Mammary epithelial cell (primary cell): ENCODE measurements at regions of chr2 and their contacts with region 1.

Region 1: DNA sequence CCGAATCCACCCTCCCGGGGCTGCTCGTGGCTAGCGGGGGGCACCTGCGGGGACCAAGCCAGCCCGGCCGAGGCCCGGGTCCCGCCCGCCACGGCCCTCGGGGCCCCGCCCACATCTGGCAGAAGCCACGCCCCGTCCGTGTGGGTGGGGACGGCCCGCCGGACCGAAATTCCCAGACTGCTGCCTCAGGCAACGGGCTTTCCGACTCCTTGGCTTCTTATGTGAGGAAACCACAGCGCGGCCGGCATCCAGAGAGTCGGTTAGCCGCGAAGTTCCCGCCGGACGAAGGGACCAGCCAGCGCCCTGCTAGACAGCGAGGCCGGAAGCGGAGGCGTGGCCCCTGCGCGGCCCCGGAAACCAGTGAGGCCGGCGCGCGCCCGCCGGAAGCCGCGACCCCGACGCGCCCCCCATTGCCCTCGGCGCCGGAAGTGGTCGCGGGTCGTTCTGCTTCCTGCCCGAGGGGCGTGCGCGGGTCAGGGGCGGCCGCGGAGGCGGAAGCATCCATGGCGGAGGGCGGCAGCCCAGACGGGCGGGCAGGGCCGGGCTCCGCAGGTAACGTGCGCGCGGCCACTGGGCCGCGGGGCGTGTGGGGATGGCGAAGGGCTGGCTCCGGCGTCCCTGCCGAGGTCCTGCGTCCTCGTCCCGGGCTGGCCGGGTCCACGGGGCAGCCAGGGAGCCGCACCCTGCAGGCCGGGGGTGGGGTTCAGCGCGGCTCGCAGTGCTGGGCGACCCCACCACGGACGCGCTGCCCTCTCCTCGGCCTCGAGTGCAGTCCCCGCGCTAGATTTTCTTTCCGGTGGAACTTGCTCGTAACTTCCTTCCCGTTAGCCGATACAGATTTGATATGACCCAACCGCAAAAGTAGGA is at the start of gene ASB1:
- DNase-seq: peak; percentile 91
- H3K4me3 ChIP-seq: peak within 1 kb of the TSS; percentile 56 to 84 (median 60)
- H3K27ac ChIP-seq: peak within 1 kb of the TSS; percentile 78
- H3K4me1 ChIP-seq: peaks cover 17% of the 10 kb centered on the region
- H3K27me3 ChIP-seq: no peaks in the 10 kb centered on the region
- CTCF ChIP-seq: no peak
- total RNA-seq, gene ASB1: 26.8 to 49.5 TPM

Region 2: DNA sequence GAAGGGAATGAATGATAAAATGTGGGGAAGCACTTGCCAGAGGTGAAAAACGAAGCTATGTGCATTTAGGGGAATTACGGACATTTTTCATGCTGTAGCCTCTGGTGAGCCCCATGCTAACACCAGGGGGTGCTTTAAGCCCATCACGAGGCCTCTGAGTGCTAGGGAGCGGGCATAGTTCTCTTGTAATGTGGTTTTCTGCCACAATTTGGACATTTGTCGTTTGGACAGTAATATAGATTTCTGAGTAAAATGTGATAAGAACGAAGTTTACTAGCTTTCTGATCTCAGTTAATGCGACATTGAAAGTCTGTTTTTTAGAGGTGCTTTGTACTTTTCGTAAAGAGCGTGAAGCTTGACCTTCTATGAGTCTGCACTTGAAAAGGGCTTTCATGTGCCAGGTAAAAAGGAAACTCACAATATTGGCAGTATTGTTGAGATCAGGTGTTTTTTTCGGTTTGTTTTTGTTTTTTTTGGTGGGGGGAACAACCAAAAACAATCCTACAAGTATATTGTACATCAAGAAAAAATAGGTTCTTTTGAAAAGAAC is 55.9 kb before region 1 on chr2:
- CTCF ChIA-PET with region 1: no interaction called
- dilution Hi-C with region 1: no loop called
- in situ Hi-C with region 1: no loop called
- intact Hi-C with region 1: loop called (anchors 1 kb)
- DNase-seq: peak; percentile 51
- H3K4me3 ChIP-seq: no peak overlapping the region
- H3K27ac ChIP-seq: no peak overlapping the region
- H3K4me1 ChIP-seq: no peaks in the 10 kb centered on the region
- H3K27me3 ChIP-seq: no peaks in the 10 kb centered on the region
- CTCF ChIP-seq: peak; percentile 79 to 82

Region 3: DNA sequence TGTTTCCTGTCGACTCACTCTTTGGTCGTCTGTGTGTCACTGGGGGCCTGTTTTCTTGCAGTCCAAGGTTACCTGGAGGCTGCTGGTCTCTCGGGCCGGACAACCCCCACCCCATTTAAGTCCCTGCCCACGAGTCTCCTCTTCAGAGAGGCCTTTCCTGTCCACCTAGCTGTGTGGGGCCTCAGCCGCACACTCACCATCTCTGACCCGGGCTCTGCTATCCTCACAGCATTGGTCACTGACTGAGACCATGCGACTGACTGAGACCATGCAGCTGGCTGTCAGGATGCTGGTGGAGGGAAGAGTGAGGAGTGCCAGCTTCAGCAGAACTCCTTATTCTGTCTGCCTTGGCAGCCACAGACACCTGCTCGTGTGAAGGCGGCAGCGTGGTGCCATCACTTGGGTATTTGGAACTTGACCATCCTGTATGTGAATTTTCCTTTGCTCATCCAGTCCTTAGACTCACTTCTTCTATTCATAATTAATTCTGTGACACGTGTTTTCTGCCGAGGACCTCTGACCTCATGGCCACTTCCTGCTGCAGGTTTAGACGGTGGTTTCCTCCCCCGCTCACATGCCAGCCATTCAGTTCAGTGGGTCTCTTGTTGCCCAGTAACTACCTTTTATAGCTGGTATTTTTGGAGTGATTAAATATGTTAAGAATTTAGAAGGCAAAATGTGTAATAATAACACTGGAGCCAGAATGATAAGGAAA is 47.5 kb before region 1 on chr2:
- CTCF ChIA-PET with region 1: no interaction called
- dilution Hi-C with region 1: no loop called
- in situ Hi-C with region 1: no loop called
- intact Hi-C with region 1: loop called (anchors 2 kb)
- DNase-seq: peak; percentile 84
- H3K4me3 ChIP-seq: no peak overlapping the region
- H3K27ac ChIP-seq: peak overlapping the region; percentile 61
- H3K4me1 ChIP-seq: peaks cover 32% of the 10 kb centered on the region
- H3K27me3 ChIP-seq: no peaks in the 10 kb centered on the region
- CTCF ChIP-seq: no peak

Region 4: DNA sequence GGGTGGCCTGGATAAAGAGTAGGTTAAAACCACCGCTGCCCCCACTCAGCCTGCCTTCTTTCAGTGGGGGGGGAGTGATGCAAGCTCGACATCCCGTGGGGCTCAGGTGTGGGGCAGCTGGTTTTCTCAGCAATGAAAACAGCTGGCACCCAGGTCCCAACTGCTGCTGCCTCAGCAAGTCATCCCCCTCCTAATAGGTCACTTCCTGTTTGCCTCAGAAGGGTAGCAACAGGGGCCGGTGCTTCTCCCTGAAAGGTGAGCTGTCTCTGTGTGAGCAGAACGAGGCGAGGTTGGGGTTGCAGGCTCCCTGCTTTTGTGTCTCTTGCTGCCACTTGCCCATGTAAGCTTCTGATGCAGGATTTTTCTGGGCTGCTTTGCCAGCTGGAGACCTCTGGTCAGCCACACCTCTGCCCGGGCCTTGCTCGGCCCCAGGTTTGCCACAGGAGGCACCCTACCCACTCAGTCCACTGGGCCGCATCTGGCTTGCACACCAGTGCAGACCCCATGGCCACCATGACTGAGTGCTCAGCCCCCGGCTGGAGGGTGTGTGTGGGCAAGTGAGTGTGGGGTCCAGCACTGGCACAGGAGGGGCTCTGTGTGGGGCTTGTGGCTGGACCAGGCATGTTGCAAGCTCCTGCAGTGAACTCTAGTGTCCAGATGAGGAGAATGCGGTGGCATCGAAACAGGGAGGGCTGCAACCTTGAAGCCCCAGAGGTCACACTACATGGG is 11.6 kb before region 1 on chr2:
- CTCF ChIA-PET with region 1: no interaction called
- dilution Hi-C with region 1: no loop called
- in situ Hi-C with region 1: no loop called
- intact Hi-C with region 1: no loop called
- DNase-seq: peak; percentile 21
- H3K4me3 ChIP-seq: no peak overlapping the region
- H3K27ac ChIP-seq: no peak overlapping the region
- H3K4me1 ChIP-seq: peaks cover 3% of the 10 kb centered on the region
- H3K27me3 ChIP-seq: no peaks in the 10 kb centered on the region
- CTCF ChIP-seq: no peak

Region 5: DNA sequence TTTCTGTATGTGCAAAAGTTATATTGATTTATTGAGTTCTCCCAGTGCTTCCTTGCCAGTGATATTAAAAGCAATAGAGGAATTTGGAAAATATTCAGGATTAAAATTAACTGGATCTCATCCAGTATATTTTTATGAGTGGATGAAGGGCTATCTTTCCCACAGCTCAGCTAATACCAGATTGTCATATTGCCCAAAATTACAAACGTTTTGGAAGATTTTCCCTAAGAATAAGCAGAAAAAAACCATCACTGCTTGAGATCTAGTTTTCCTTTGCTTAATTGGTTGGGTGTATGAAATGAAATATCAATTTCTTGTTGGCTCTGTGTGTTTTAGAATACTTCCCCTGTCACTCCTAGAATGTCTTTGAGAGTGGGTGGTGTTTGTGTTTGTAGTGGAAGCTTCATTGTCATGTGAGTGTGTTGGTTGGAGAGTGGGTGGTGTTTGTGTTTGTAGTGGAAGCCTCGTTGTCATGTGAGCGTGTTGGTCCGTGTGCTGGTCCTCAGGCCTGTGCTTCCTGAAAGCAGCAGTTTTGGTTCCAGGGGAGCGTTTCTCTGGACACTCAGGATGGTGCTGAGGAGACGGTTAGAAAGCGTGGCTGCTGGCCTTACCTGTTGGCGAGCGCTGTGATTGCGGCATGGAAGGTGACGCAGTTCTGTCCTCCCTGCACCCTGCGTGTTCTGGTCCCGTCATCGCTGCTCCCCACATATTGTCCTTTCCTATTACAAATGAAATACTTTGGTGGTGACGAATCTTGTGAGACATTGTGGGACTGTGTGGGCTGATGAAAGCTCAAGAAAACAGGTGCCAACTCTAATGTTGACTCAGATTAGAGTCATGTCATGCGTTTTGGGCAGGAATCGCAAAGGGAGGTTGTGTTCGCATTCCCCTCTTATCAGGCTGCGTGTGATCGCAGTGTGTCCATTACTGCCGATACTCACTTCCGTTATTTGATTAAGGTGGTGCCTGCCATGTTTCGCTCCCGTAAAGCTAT is 12.4 kb after region 1 on chr2:
- CTCF ChIA-PET with region 1: no interaction called
- dilution Hi-C with region 1: no loop called
- in situ Hi-C with region 1: no loop called
- intact Hi-C with region 1: loop called (anchors 1 kb)
- DNase-seq: peak; percentile 100
- H3K4me3 ChIP-seq: peak overlapping the region; percentile 6 to 29 (median 22)
- H3K27ac ChIP-seq: peak overlapping the region; percentile 97
- H3K4me1 ChIP-seq: peaks cover 29% of the 10 kb centered on the region
- H3K27me3 ChIP-seq: no peaks in the 10 kb centered on the region
- CTCF ChIP-seq: no peak

Region 6: DNA sequence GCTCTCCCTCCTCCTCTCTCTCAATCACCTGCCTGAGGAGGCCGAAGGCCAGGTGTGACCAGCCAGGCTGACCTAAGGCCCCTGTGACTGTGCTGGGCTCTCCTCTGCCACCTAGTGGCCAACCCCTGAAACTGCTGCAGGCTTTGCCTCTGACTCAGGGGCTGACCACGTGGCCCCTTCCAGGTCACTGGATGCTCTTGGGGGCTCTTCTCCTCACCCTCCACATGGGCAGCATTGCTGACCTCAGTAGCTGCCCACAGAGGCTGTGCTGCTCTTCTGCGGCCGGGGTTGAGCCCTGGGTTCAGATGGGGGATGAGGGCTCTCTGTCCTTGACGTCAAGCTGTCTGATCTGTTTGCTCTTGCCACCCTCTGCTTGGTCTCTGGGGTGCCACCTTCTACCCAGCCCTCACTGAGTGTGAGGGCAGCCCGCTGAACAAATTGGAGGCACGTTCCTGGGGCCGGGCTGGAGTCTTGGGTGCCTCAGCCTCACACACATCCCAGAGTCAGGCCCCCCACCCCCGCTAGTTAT is 543.8 kb after region 1 on chr2:
- CTCF ChIA-PET with region 1: no interaction called
- dilution Hi-C with region 1: no loop called
- in situ Hi-C with region 1: no loop called
- intact Hi-C with region 1: no loop called
- DNase-seq: peak; percentile 36
- H3K4me3 ChIP-seq: no peak overlapping the region
- H3K27ac ChIP-seq: no peak overlapping the region
- H3K4me1 ChIP-seq: peaks cover 21% of the 10 kb centered on the region
- H3K27me3 ChIP-seq: no peaks in the 10 kb centered on the region
- CTCF ChIP-seq: peak; percentile 100